CD4-positive, alpha-beta memory T cell (primary cell): ENCODE measurements at regions of chr17 and their contacts with region 1.

Region 1: DNA sequence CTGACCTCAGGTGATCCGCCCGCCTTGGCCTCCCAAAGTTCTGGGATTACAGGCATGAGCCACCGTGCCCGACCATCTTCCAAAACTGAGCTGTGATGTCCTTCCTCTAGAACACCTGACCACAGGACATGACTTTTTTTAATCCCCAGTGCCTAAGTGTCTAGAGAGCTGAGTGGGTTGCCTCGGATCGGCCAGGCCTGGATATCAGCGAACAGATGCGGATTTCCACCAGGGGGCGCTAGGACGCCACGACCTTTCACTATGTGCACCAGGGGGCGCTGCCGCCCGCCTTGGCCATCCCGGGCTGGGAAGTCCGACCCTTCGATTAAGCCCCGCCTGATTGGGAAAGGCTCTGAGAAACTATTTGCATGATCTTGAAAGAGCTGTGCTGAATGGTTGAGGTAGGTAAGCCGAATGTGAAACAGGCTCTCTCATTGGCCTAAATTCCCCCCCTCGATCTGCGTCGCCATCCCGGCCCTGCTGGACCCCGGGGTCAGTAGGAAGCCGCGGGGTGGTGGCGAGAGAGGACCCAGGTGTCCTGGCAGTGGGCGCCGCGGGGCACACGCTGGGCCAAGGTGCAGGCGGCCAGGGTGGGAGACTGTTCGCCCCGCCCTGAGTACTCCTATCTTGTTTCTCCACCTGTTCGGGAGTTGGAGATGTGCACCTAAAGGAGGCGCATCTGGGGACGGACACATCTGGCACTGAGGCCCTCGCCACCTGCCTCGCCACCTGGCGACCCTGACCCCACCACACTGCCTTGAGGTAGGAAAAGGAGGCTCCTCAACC is at the start of gene ACBD4:
- DNase-seq: peak; percentile 96 to 97 (median 97)
- H3K4me3 ChIP-seq: peak within 1 kb of the TSS; percentile 90 to 92
- H3K4me3 Mint-ChIP-seq: peak within 1 kb of the TSS; percentile 84 to 94 (median 90)
- H3K27ac ChIP-seq: peak within 1 kb of the TSS; percentile 70
- H3K27ac Mint-ChIP-seq: peak within 1 kb of the TSS; percentile 86 to 94 (median 91)
- H3K4me1 ChIP-seq: peaks cover 25% of the 10 kb centered on the region
- H3K4me1 Mint-ChIP-seq: peaks cover 9 to 37% (median 16%) of the 10 kb centered on the region in 4 donors
- H3K27me3 ChIP-seq: no peaks in the 10 kb centered on the region
- H3K27me3 Mint-ChIP-seq: no peaks in the 10 kb centered on the region
- total RNA-seq, gene ACBD4: 41.9 to 48.1 TPM

Region 2: GRCh38 chr17:45060797-45061605 is 74.4 kb before region 1 on chr17 and contains the start of gene NMT1:
- CTCF ChIA-PET with region 1: interaction called, 10 read pairs
- POLR2A ChIA-PET with region 1: interaction called, 6 read pairs
- intact Hi-C with region 1: loop called (anchors 1 kb)
- DNase-seq: peak; percentile 98 to 99 (median 98)
- H3K4me3 ChIP-seq: peak within 1 kb of the TSS; percentile 80 to 100
- H3K4me3 Mint-ChIP-seq: peak within 1 kb of the TSS; percentile 96 to 100 (median 100)
- H3K27ac ChIP-seq: peak within 1 kb of the TSS; percentile 88
- H3K27ac Mint-ChIP-seq: peak within 1 kb of the TSS; percentile 91 to 100 (median 98)
- H3K4me1 ChIP-seq: peaks cover 42% of the 10 kb centered on the region
- H3K4me1 Mint-ChIP-seq: peaks cover 20 to 64% (median 46%) of the 10 kb centered on the region in 4 donors
- H3K27me3 ChIP-seq: no peaks in the 10 kb centered on the region
- H3K27me3 Mint-ChIP-seq: no peaks in the 10 kb centered on the region
- total RNA-seq, gene NMT1: 125 to 126 TPM

Region 3: DNA sequence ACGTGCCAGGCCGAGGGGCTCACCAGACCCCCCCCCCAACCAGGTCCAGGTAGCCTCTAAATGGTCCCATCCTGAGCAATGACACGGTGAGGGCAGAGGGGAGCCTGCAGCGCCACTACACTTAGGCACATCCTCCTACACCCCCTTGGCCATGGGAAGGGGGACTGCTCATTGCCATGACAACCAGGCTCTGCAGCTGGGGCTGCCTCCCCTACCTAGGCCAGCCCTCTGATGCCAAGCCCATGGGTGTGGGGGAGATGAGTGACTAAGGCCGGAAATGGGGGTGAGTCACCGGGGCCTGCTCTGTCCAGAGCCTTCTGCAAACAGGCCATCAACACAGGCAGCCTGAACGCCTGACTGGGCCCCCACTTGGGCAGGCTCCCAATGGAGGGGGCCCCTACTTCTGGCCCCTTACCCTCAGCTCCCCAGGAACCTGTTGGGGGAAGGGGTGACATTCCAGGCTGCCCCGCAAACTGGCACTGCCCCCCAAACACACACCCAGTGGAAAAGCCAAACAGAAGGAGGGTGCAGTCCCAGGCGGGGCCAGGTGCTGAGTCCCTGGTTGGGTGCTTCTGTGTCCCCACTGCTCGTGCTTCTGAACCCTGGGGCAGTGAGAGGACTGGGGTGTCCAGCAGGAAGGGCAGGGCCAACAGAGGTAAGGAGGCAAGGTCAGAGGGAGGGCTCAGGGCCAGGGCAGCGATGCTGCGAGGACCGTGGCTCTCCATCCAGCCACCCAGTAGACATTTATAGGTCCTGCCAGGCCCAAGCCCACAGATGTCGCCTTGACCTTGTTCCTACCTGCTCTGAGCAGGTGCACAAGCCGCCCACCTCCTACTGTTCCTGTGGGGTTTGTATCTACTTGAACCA is 11.2 kb before region 1 on chr17:
- CTCF ChIA-PET with region 1: interaction called, 17 read pairs
- POLR2A ChIA-PET with region 1: no interaction called
- intact Hi-C with region 1: no loop called
- DNase-seq: peak in 1 of 5 donors; percentile 50
- H3K4me3 ChIP-seq: no peak overlapping the region
- H3K4me3 Mint-ChIP-seq: peak overlapping the region in 1 of 8 donors; percentile 31
- H3K27ac ChIP-seq: no peak overlapping the region
- H3K27ac Mint-ChIP-seq: peak overlapping the region in 1 of 7 donors; percentile 25
- H3K4me1 ChIP-seq: peaks cover 5% of the 10 kb centered on the region
- H3K4me1 Mint-ChIP-seq: peaks cover 0 to 8% (median 1%) of the 10 kb centered on the region in 4 donors
- H3K27me3 ChIP-seq: no peaks in the 10 kb centered on the region
- H3K27me3 Mint-ChIP-seq: no peaks in the 10 kb centered on the region

Region 4: GRCh38 chr17:45172454-45173286 is 37.3 kb after region 1 on chr17:
- CTCF ChIA-PET with region 1: interaction called, 29 read pairs
- POLR2A ChIA-PET with region 1: interaction called, 3 read pairs
- intact Hi-C with region 1: no loop called
- DNase-seq: peak; percentile 21 to 44 (median 35)
- H3K4me3 ChIP-seq: peak overlapping the region; percentile 11 to 46
- H3K4me3 Mint-ChIP-seq: peak overlapping the region; percentile 69 to 87 (median 79)
- H3K27ac ChIP-seq: peak overlapping the region; percentile 17
- H3K27ac Mint-ChIP-seq: peak overlapping the region; percentile 43 to 91 (median 87)
- H3K4me1 ChIP-seq: peaks cover 16% of the 10 kb centered on the region
- H3K4me1 Mint-ChIP-seq: peaks cover 5 to 17% (median 12%) of the 10 kb centered on the region in 4 donors
- H3K27me3 ChIP-seq: no peaks in the 10 kb centered on the region
- H3K27me3 Mint-ChIP-seq: no peaks in the 10 kb centered on the region

Region 5: DNA sequence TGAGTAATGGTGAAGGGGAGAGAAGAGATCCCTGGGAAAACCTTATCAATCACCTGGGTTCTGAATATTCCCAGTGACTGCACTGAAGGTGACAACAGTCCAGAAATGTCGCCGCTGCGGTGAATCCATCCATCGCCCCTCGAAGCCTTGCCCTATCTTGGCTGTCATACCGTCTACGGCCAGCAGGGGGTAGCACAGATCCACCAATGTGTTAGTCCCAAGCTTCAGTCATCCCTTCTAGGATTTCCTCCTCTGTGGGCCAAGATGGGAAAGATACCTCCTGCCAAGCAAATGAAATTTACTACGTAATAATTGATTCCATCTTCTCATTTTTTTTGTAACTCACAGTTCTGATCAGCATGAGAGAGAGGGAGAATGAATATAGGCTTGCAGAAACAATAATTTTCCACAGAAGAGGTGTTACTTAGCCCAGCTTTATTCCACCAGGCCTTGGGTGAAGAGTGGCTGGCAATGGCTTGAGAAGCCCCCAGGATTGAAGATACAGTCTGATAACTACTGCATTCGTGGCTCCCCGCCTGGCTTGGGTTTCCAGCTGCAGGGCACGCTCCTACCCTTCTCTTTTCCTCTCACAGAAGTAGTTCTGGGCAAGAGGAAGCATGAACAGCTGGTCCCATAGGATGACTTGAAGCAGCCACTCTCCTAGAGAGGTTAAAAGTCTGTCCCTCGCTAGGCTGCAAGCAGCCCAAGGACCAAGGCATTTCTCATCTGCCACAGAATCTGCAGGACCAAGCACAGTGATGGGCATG is 83.7 kb after region 1 on chr17:
- CTCF ChIA-PET with region 1: interaction called, 12 read pairs
- POLR2A ChIA-PET with region 1: interaction called, 6 read pairs
- intact Hi-C with region 1: no loop called
- DNase-seq: peak; percentile 77 to 84 (median 82)
- H3K4me3 ChIP-seq: peak overlapping the region in 1 of 2 donors; percentile 13
- H3K4me3 Mint-ChIP-seq: peak overlapping the region; percentile 88 to 95 (median 92)
- H3K27ac ChIP-seq: peak overlapping the region; percentile 12
- H3K27ac Mint-ChIP-seq: peak overlapping the region; percentile 84 to 94 (median 91)
- H3K4me1 ChIP-seq: peaks cover 29% of the 10 kb centered on the region
- H3K4me1 Mint-ChIP-seq: peaks cover 21 to 49% (median 24%) of the 10 kb centered on the region in 4 donors
- H3K27me3 ChIP-seq: no peaks in the 10 kb centered on the region
- H3K27me3 Mint-ChIP-seq: no peaks in the 10 kb centered on the region

Region 6: GRCh38 chr17:45256114-45256966 is 121.0 kb after region 1 on chr17:
- CTCF ChIA-PET with region 1: no interaction called
- POLR2A ChIA-PET with region 1: no interaction called
- intact Hi-C with region 1: no loop called
- DNase-seq: no peak
- H3K4me3 ChIP-seq: no peak overlapping the region
- H3K4me3 Mint-ChIP-seq: peak overlapping the region in 4 of 8 donors; percentile 7 to 57 (median 28)
- H3K27ac ChIP-seq: no peak overlapping the region
- H3K27ac Mint-ChIP-seq: peak overlapping the region; percentile 16 to 81 (median 57)
- H3K4me1 ChIP-seq: peaks cover 36% of the 10 kb centered on the region
- H3K4me1 Mint-ChIP-seq: peaks cover 27 to 71% (median 44%) of the 10 kb centered on the region in 4 donors
- H3K27me3 ChIP-seq: no peaks in the 10 kb centered on the region
- H3K27me3 Mint-ChIP-seq: no peaks in the 10 kb centered on the region